Aorta (tissue), 5 donors: ENCODE measurements at regions of chr3 and their contacts with region 1.

Region 1: DNA sequence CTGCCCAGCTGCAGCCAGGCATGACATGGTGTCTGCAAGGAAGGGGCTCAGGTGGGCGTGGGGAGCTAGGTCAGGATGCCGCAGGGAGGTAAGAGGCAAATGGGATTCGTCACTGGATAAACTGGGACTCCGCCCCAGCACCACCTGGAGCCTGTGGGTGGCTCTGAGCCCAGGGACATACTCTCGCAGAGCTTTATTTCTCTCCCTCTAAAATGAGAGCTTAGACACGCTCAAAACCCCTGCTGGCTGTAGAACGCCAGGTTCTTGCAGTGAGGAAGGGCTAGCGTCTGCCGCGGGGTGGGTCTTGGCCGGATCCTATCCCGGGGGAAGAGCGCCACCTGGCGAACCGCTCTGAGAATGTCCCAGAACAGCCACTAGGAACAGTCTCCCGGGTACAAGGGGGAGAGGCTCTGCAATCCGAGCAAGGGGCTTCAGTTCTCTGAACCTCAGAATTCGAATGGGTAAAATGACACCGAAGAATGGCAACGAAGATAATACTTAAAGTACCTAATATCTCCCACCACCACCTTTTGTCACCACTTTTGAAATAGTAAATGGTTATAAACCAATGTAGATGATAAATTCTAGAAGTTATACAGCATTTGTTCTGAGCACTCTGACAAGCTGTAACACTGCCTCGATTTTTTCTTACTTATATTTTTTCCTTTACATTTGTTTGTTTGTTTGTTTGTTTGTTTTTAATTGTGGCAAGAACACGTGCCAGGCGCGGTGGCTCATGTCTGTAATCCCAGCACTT is 53.2 kb upstream of the SRGAP3 start:
- DNase-seq: peak; percentile 82 to 93
- ATAC-seq: peak; percentile 94
- H3K4me3 ChIP-seq: no peak overlapping the region
- H3K27ac ChIP-seq: no peak overlapping the region
- H3K4me1 ChIP-seq: no peaks in the 10 kb centered on the region
- H3K27me3 ChIP-seq: no peaks in the 10 kb centered on the region

Region 2: DNA sequence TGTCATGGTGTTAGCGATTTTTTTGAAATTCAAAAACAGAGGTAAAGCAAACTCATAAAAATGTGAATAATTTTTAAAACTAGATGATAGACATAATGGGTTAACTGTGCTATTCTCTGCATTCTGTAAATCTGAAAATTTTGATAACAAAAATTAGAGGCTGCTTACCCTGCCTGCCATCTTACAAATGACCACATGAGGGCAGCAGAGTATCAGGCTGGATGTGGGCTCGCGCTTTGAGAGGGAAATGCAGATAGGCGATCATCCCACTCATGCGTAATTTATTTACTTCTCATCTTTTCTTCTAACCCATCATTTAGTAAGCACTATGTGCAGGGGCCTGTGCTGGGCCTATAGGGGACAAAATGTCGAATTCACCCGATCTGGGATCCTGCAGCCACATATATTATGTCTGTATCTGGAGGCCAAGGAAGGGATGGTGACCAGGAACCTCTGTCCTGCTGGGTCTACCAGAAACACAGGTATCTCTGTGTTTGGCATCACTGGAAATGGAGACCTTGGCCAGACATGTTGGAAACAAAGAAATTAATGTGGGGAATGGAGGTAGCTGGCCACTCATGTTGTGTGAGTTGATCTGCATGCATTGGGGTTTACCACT is 331.5 kb before region 1 on chr3:
- intact Hi-C with region 1: loop called (anchors 1 to 2 kb)
- DNase-seq: no peak
- ATAC-seq: peak; percentile 85
- H3K4me3 ChIP-seq: no peak overlapping the region
- H3K27ac ChIP-seq: no peak overlapping the region
- H3K4me1 ChIP-seq: no peaks in the 10 kb centered on the region
- H3K27me3 ChIP-seq: no peaks in the 10 kb centered on the region

Region 3: DNA sequence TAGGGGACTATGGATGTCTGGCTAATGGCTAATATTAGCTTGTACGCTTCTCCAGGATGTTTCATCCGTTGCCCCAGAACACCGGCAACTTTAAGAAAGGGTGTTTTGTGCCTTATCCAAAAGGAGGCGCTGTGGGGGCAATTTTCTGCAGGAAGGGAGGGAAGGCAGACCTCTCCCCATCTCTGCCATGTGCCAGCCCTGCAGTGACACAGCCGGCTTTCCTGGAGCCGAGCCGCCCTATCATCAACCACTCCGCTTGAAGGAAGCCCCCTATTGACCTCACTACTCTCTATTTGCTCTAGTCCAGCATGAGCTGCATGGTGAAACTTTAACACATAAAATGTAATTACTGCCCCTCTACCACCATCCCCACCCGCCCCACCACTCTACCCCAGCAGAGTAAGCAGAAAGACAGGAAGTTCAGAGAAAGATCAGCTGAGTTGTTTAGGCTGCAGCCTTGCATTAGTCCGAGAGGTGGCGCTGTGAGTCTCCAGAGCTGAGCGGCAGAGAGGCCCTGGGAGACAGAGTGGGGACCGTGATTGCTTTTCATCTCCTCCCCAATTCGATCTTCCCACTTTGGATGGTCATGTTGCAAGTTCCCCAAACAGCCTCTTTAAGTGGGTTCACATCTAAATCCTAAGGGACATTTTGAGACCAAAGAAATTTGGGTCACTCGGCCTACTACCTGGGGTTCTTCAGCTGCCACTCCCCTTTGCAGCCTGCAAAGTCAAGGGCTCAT is 314.8 kb before region 1 on chr3:
- intact Hi-C with region 1: loop called in 1 of 2 experiments (anchors 5 kb)
- DNase-seq: peak; percentile 77 to 85
- ATAC-seq: peak; percentile 57
- H3K4me3 ChIP-seq: no peak overlapping the region
- H3K27ac ChIP-seq: no peak overlapping the region
- H3K4me1 ChIP-seq: no peaks in the 10 kb centered on the region
- H3K27me3 ChIP-seq: no peaks in the 10 kb centered on the region